HEK293 (cell line): ENCODE measurements at regions of chr3 and their contacts with region 1.

Region 1: DNA sequence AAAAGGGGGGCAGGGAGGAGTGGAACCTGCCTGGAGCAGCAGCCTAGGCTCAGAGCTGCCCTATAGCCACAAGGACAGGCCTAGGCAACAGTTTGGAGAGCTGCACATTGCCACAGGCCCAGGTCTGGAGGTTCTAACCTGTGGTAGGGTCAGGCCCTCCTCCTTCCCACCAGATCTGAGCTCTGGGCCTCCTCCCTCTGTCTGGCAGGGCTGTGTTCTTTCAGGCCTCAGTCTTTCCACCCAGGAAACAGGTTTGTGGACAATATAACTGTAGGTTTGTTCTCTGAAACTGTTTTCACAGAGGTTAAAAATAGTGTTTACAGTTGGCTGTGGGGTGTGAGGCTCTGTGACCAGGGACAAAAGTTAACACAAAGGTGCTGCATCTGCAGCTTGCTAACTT is 9.0 kb upstream of the CAMKV start:
- H3K4me3 ChIP-seq: no peak overlapping the region
- H3K27ac ChIP-seq: no peak overlapping the region
- H3K4me1 ChIP-seq: no peaks in the 10 kb centered on the region
- CTCF ChIP-seq: no peak

Region 2: GRCh38 chr3:49591615-49592014 is 287.1 kb before region 1 on chr3:
- CTCF ChIA-PET with region 1: no interaction called
- POLR2A ChIA-PET with region 1: interaction called, 12 read pairs
- H3K4me3 ChIP-seq: no peak overlapping the region
- H3K27ac ChIP-seq: no peak overlapping the region
- H3K4me1 ChIP-seq: no peaks in the 10 kb centered on the region
- CTCF ChIP-seq: no peak